ENCODE measurements at regions of chr2 and their contacts with region 1.

Region 1: DNA sequence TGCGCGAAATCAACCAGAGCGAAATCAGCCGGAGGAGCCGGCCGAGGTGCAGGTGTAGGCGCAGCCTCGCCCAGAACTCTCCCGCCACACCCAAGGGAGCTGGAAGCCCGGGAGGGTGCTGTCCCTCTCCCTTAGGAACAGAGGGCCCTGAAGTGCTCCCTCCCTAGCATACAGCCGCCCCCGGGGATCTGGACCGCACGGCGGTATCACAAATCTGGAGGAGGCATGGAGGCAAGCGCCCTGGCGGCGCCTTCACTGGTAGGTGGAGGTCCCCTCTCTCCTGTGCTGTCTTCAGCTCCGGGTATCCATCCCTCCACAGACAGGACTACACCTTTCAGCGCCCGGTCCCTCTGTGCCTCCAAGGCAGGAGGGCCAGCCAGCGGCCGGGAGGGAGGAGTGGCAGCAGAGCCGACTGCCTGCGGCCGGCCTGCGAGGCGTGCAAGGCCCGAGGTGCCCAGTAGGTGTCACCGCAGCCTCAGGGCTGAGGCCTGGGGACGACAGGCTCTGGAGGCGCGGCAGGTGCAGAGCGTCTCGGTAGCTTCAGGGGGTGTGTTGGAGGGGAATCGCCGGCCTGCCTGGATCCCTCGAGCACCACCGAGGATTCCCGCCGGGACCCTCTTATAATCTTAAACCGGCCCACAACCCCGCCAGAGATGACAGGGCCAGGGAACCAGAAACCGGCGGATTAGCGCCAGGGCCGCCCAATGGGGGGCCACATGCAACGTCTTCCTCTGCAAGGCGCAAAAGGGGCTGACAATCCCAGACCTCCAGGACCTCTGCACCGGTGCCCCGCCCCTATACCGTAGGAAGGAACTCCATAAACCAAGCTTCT is 2.8 kb downstream of the IHH start:
- DNase-seq: peak; percentile 85
- H3K4me3 Mint-ChIP-seq: peak overlapping the region; percentile 39
- H3K27ac Mint-ChIP-seq: no peak overlapping the region
- H3K4me1 Mint-ChIP-seq: peaks cover 18% of the 10 kb centered on the region
- H3K27me3 Mint-ChIP-seq: peaks cover 55% of the 10 kb centered on the region

Region 2: DNA sequence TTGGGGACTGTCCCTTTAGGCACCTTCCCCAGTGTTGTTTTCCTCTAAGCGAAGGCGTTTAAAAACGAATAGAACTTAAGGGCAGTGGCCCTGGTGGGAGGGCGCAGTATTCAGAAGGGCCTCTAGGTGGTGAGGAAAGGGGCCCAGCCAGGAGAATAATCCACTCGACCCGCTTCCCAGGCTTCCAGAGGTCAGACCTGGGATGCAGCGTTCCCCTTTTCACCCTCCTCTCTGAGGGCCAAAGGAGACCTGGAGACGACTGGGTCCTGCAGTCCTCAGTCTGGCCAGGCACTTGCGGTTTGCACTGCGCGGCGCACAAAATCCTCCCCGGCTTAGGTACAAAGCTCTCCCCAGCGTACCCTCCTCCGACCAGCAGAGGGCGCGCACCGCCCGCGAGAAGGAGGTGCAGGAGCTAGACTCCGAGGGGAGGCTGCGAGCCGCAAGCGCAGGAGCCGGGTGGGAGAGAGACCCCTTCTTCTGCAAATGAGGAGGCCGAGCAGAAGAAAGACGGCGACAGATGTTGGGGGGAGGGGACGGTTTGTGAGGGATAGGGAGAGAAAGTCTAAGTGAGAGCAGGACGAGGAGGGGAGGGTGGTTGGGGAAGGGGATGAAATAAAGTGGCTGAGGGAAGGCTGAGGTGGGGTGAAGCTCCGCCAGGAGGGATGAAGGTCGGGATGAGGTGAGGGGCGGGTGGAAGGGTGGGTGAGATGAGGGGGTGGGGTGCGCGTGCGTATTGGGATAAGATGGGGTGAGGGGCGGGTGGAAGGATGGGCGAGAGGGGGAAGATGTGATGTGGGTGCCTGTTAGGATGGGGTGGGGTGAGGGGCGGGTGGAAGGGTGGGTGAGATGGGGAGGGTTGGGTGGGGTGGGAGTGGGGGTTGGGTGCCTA is 77.8 kb before region 1 on chr2:
- CTCF ChIA-PET with region 1: interaction called, 11 read pairs
- intact Hi-C with region 1: loop called (anchors 1 kb)
- DNase-seq: peak; percentile 90
- H3K4me3 Mint-ChIP-seq: peak overlapping the region; percentile 56
- H3K27ac Mint-ChIP-seq: no peak overlapping the region
- H3K4me1 Mint-ChIP-seq: peaks cover 27% of the 10 kb centered on the region
- H3K27me3 Mint-ChIP-seq: peaks cover 58% of the 10 kb centered on the region

Region 3: GRCh38 chr2:219029829-219030165 is 28.1 kb before region 1 on chr2:
- CTCF ChIA-PET with region 1: interaction called, 23 read pairs
- intact Hi-C with region 1: no loop called
- DNase-seq: peak; percentile 83
- H3K4me3 Mint-ChIP-seq: no peak overlapping the region
- H3K27ac Mint-ChIP-seq: no peak overlapping the region
- H3K4me1 Mint-ChIP-seq: no peaks in the 10 kb centered on the region
- H3K27me3 Mint-ChIP-seq: peaks cover 18% of the 10 kb centered on the region

Region 4: GRCh38 chr2:219087361-219087760 is 29.4 kb after region 1 on chr2:
- CTCF ChIA-PET with region 1: interaction called, 13 read pairs
- intact Hi-C with region 1: no loop called
- DNase-seq: no peak
- H3K4me3 Mint-ChIP-seq: no peak overlapping the region
- H3K27ac Mint-ChIP-seq: no peak overlapping the region
- H3K4me1 Mint-ChIP-seq: peaks cover 8% of the 10 kb centered on the region
- H3K27me3 Mint-ChIP-seq: no peaks in the 10 kb centered on the region

Region 5: DNA sequence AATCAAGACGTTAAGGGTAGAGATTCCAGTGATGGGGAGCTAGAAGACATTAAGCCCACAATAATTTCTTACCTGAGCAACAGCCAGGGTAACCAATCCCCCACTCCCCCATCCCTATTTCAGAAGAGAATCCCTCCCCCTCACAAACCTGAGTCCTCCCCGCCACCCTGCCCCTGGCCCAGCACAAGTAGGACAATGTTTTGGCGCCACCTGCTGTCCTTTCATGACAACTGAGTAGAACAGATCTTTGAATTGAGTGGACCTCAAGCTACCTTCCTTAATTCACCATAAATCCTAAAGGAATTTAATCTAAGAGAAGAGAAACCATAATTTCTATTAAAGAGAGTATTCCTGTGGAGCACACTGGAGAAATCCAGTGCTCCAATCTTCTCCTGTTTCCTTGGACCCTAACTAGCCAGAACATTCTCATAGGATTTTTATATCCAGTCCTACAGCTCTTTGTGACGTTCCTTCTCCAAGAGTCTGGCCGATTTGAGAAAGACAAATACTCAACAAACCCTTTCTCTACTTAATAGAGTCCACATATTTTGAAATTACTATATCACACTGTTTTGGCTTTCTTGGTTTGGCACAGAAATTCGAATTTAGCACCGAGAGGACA is 61.6 kb after region 1 on chr2:
- CTCF ChIA-PET with region 1: interaction called, 82 read pairs
- intact Hi-C with region 1: loop called (anchors 1 kb)
- DNase-seq: peak; percentile 78
- H3K4me3 Mint-ChIP-seq: no peak overlapping the region
- H3K27ac Mint-ChIP-seq: no peak overlapping the region
- H3K4me1 Mint-ChIP-seq: peaks cover 4% of the 10 kb centered on the region
- H3K27me3 Mint-ChIP-seq: no peaks in the 10 kb centered on the region

Region 6: DNA sequence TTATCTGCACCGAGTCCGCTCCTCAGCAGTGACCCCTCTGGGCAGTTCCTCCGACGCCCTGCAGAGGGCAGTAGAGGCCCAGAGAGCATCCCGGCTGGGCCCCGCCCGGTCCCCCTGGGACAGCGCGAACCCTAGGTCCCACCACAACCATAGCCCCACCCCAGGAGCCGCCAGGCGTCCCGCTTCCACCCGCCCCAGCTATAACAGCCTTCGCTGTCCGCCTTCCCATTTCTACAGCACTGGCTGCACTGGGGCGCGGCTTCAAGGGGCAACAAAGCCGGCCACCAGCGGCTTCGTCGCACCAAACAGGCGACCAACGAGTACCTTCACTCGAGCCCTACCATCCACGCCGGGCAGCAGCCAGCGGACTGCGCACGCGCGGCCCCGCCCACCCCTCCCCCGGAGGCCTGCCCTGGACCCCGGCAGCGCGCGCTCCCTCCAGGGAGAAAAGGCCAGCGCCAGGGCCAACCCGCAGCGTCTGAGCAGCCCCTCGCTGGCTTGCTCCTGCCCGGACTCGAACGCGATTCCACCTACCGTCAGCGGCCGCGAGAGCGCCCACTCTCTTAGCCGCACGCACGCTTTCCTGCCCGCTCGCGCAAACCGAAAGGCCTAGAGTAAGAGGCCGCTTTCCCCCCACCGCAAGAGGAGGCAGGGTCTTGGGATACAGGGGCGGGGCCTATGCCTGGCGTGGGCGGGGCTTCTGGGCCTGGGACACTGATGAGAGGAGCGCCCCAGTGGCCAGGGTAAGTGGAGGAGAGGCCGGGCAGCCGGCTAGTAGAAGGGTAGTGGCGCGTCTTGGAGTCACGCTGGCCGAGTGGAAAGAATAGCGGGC is 102.5 kb after region 1 on chr2 and contains the start of gene NHEJ1:
- CTCF ChIA-PET with region 1: interaction called, 118 read pairs
- intact Hi-C with region 1: loop called (anchors 1 kb)
- DNase-seq: peak; percentile 96
- H3K4me3 Mint-ChIP-seq: peak within 1 kb of the TSS; percentile 80
- H3K27ac Mint-ChIP-seq: peak within 1 kb of the TSS; percentile 88
- H3K4me1 Mint-ChIP-seq: peaks cover 13% of the 10 kb centered on the region
- H3K27me3 Mint-ChIP-seq: no peaks in the 10 kb centered on the region
- total RNA-seq, gene NHEJ1: 24.4 to 26.6 TPM